Naive thymus-derived CD4-positive, alpha-beta T cell (primary cell): ENCODE measurements at regions of chr3 and their contacts with region 1.

Region 1: GRCh38 chr3:48188266-48189201 is at the start of gene CDC25A:
- DNase-seq: peak; percentile 69 to 94 (median 87)
- ATAC-seq: peak; percentile 100
- H3K4me3 ChIP-seq: peak within 1 kb of the TSS; percentile 88
- H3K4me3 Mint-ChIP-seq: peak within 1 kb of the TSS; percentile 89 to 96 (median 94)
- H3K27ac ChIP-seq: peak within 1 kb of the TSS; percentile 57
- H3K27ac Mint-ChIP-seq: peak within 1 kb of the TSS in 8 of 9 donors; percentile 8 to 84 (median 66)
- H3K4me1 ChIP-seq: peaks cover 4 to 6% of the 10 kb centered on the region in 2 donors
- H3K4me1 Mint-ChIP-seq: peaks cover 6 to 36% (median 13%) of the 10 kb centered on the region in 7 donors
- H3K27me3 ChIP-seq: no peaks in the 10 kb centered on the region
- H3K27me3 Mint-ChIP-seq: peaks cover 0 to 21% (median 14%) of the 10 kb centered on the region in 5 donors
- total RNA-seq, gene CDC25A: 0.61 to 20.7 TPM in 2 of 5 experiments, not detected in the others

Region 2: DNA sequence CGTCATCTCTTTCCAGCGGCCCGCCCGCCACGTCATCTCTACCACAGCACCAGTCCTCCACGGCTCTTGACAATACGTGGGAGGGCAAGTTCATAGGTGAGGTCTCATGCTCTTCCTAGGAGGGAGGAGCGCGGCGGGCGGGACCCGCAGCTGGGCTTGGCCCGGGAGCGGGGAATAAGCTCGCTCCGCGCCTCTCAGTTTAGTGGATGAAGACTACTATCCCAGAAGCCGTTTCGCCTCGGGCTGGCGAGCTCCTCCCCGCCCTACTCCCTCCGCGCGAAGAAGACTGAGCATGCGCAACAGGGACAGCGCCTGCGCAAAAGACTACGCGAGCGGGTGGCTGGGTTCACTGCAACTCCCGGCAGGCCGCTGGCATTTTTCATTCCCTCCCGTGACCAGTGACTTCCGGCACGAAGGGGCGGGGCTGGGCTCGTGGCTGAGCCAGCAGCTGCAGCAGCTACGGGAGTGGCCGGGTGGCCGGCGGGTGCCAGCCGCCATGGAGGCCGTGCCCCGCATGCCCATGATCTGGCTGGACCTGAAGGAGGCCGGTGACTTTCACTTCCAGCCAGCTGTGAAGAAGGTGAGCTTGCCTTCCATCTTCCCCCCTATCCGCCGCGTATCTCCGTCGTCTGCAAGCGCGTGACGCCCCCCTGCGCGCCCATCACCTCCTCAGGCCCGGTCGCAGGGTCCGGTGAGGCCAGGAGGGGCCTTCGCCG is 807.8 kb before region 1 on chr3 and contains the start of gene PTPN23:
- CTCF ChIA-PET with region 1: no interaction called
- POLR2A ChIA-PET with region 1: no interaction called
- intact Hi-C with region 1: loop called in 1 of 2 experiments (anchors 1 kb)
- DNase-seq: peak; percentile 96 to 99 (median 99)
- ATAC-seq: peak; percentile 82
- H3K4me3 ChIP-seq: peak within 1 kb of the TSS; percentile 86
- H3K4me3 Mint-ChIP-seq: peak within 1 kb of the TSS; percentile 90 to 100 (median 98)
- H3K27ac ChIP-seq: peak within 1 kb of the TSS; percentile 92
- H3K27ac Mint-ChIP-seq: peak within 1 kb of the TSS; percentile 92 to 100 (median 99)
- H3K4me1 ChIP-seq: peaks cover 23 to 26% of the 10 kb centered on the region in 2 donors
- H3K4me1 Mint-ChIP-seq: peaks cover 40 to 56% (median 48%) of the 10 kb centered on the region in 7 donors
- H3K27me3 ChIP-seq: no peaks in the 10 kb centered on the region
- H3K27me3 Mint-ChIP-seq: peaks cover 0 to 2% (median 0%) of the 10 kb centered on the region in 5 donors
- total RNA-seq, gene PTPN23: 35.8 to 51.2 (median 38.5) TPM

Region 3: DNA sequence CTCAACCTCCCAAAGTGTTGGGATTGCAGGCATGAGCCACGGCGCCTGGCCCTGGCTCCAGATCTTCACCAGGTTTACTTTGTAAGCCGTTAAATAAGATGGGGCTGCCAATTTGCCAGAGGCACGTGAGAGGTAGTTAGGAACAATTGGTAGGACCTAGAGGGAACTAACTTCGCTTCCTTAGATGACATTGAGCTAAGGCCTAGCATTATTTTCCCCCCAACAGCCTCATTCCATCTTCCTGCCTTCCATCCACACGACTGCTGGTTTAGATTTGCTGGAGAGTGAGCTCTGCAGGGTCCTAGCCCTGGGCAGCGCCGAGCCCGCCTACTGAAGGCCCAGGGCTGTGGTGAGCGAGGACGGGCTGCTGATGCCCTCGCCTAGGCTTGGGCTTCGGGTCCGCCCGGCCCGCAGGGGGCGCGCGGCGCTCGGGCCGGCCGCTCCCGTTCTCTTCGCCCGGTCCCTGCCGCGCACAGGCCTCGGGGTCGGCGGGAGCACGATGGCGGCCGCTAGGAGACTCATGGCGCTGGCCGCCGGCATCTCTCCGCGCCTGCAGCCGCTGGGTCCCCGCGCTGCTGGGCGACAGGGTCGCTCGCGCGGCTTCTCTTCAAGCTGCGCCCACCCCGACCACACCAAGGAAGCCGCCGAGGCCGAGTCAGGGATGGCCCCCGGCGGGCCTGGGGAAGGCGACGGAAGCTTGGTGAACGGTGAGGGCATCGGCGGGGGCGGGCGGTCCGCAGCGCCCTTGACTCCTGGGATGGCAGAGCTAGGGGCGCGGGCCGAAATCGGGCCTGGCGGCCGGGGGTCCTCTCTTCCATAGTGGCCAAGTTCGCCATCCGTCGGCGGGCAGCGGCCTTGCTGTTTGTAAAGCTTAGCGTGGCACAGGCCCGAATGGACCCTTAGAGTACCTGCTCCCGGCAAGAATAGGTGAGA is 363.7 kb before region 1 on chr3:
- CTCF ChIA-PET with region 1: no interaction called
- POLR2A ChIA-PET with region 1: no interaction called
- intact Hi-C with region 1: loop called in 1 of 2 experiments (anchors 1 kb)
- DNase-seq: peak; percentile 62 to 86 (median 79)
- ATAC-seq: peak; percentile 100
- H3K4me3 ChIP-seq: peak overlapping the region; percentile 79
- H3K4me3 Mint-ChIP-seq: peak overlapping the region; percentile 81 to 94 (median 90)
- H3K27ac ChIP-seq: peak overlapping the region; percentile 88
- H3K27ac Mint-ChIP-seq: peak overlapping the region; percentile 66 to 96 (median 89)
- H3K4me1 ChIP-seq: peaks cover 15% of the 10 kb centered on the region in 2 donors
- H3K4me1 Mint-ChIP-seq: peaks cover 15 to 46% (median 36%) of the 10 kb centered on the region in 7 donors
- H3K27me3 ChIP-seq: no peaks in the 10 kb centered on the region
- H3K27me3 Mint-ChIP-seq: no peaks in the 10 kb centered on the region

Region 4: GRCh38 chr3:47910777-47911440 is 277.6 kb before region 1 on chr3:
- CTCF ChIA-PET with region 1: no interaction called
- POLR2A ChIA-PET with region 1: no interaction called
- intact Hi-C with region 1: no loop called
- DNase-seq: no peak
- ATAC-seq: no peak
- H3K4me3 ChIP-seq: no peak overlapping the region
- H3K4me3 Mint-ChIP-seq: no peak overlapping the region
- H3K27ac ChIP-seq: no peak overlapping the region
- H3K27ac Mint-ChIP-seq: peak overlapping the region in 1 of 9 donors; percentile 34
- H3K4me1 ChIP-seq: no peaks in the 10 kb centered on the region
- H3K4me1 Mint-ChIP-seq: peaks cover 0 to 4% (median 0%) of the 10 kb centered on the region in 7 donors
- H3K27me3 ChIP-seq: no peaks in the 10 kb centered on the region
- H3K27me3 Mint-ChIP-seq: no peaks in the 10 kb centered on the region

Region 5: DNA sequence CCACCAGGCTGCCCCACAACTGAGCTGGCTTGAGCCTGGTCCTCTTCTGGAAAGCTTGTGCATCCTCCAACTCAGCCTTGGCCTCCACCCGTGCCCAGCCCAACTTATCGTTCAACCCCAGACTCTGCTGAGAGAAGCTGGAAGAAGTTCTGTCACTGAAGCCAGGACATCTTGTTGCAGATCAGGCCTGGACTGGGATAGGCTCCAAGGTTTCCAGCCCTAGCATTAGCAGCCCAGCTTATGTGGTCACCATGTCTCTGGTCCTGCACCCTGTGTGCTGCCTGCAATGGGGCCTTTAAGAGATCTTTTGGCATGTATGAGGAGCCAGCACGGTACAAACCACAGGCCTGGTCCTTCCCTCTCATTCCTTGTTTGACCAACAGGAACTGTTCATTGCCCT is 19.5 kb after region 1 on chr3:
- CTCF ChIA-PET with region 1: no interaction called
- POLR2A ChIA-PET with region 1: no interaction called
- intact Hi-C with region 1: no loop called
- DNase-seq: no peak
- ATAC-seq: no peak
- H3K4me3 ChIP-seq: no peak overlapping the region
- H3K4me3 Mint-ChIP-seq: no peak overlapping the region
- H3K27ac ChIP-seq: no peak overlapping the region
- H3K27ac Mint-ChIP-seq: no peak overlapping the region
- H3K4me1 ChIP-seq: no peaks in the 10 kb centered on the region
- H3K4me1 Mint-ChIP-seq: no peaks in the 10 kb centered on the region
- H3K27me3 ChIP-seq: no peaks in the 10 kb centered on the region
- H3K27me3 Mint-ChIP-seq: peaks cover 0 to 2% (median 0%) of the 10 kb centered on the region in 5 donors

Region 6: GRCh38 chr3:48240711-48241491 is 52.4 kb after region 1 on chr3 and contains the start of gene ZNF589:
- CTCF ChIA-PET with region 1: no interaction called
- POLR2A ChIA-PET with region 1: interaction called, 4 read pairs
- intact Hi-C with region 1: loop called (anchors 1 kb)
- DNase-seq: peak; percentile 87 to 96 (median 92)
- ATAC-seq: peak; percentile 99
- H3K4me3 ChIP-seq: peak within 1 kb of the TSS; percentile 92
- H3K4me3 Mint-ChIP-seq: peak within 1 kb of the TSS; percentile 82 to 94 (median 92)
- H3K27ac ChIP-seq: peak within 1 kb of the TSS; percentile 79
- H3K27ac Mint-ChIP-seq: peak within 1 kb of the TSS; percentile 88 to 96 (median 93)
- H3K4me1 ChIP-seq: peaks cover 7 to 14% of the 10 kb centered on the region in 2 donors
- H3K4me1 Mint-ChIP-seq: peaks cover 5 to 36% (median 25%) of the 10 kb centered on the region in 7 donors
- H3K27me3 ChIP-seq: no peaks in the 10 kb centered on the region
- H3K27me3 Mint-ChIP-seq: no peaks in the 10 kb centered on the region
- total RNA-seq, gene ZNF589: 37.7 to 64.0 (median 40.2) TPM

Region 7: GRCh38 chr3:48301020-48301796 is 112.7 kb after region 1 on chr3:
- CTCF ChIA-PET with region 1: no interaction called
- POLR2A ChIA-PET with region 1: no interaction called
- intact Hi-C with region 1: loop called (anchors 1 kb)
- DNase-seq: peak; percentile 69 to 95 (median 81)
- ATAC-seq: peak; percentile 97
- H3K4me3 ChIP-seq: peak within 1 kb of the TSS; percentile 89
- H3K4me3 Mint-ChIP-seq: peak within 1 kb of the TSS; percentile 84 to 97 (median 91)
- H3K27ac ChIP-seq: peak within 1 kb of the TSS; percentile 96
- H3K27ac Mint-ChIP-seq: peak within 1 kb of the TSS; percentile 81 to 98 (median 94)
- H3K4me1 ChIP-seq: peaks cover 10 to 12% of the 10 kb centered on the region in 2 donors
- H3K4me1 Mint-ChIP-seq: peaks cover 26 to 47% (median 40%) of the 10 kb centered on the region in 7 donors
- H3K27me3 ChIP-seq: no peaks in the 10 kb centered on the region
- H3K27me3 Mint-ChIP-seq: peaks cover 0 to 13% (median 0%) of the 10 kb centered on the region in 5 donors

Region 8: DNA sequence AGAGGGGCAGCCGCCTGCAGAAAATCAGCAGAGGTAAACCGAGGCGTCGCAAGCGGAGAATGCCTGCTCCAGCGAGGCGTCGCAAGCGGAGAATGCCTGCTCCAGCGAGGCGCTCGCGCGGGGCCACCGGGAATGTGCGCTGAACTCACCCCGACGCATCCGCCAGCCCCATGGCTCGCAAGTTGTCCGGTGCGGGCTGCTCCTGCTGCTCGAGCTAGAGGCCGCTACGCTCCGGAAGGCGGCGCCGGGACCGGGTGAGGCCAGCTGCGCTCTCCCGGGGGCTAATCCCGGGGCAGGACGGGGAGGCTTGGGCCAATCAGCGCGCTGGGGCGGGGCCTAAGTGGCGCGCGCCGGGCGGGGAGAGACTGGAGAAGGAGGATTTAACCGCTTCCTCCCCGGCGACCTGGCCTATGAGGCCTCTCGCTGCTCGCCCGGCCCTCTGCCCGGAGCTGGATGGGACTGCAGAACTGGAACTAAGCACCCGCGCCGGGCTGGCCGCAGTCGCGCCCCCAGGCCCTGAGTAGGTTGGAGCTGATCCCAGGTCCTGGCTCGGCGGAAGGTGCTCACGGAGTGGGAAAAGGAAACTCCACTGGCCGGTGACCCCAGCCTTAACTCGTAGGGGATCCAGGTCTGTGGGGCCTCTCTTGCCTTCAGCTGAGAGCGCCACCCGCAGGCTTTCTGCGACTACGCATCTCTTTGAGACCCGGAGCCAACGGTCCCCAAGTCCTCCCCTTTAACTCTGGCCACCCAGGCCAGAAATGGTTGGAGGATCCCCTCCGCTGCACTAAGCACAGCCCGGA is 446.9 kb after region 1 on chr3 and contains the start of gene SLC26A6:
- CTCF ChIA-PET with region 1: no interaction called
- POLR2A ChIA-PET with region 1: no interaction called
- intact Hi-C with region 1: loop called in 1 of 2 experiments (anchors 1 kb)
- DNase-seq: peak; percentile 81 to 98 (median 86)
- ATAC-seq: peak; percentile 98
- H3K4me3 ChIP-seq: peak within 1 kb of the TSS; percentile 76
- H3K4me3 Mint-ChIP-seq: peak within 1 kb of the TSS; percentile 79 to 92 (median 88)
- H3K27ac ChIP-seq: peak within 1 kb of the TSS; percentile 70
- H3K27ac Mint-ChIP-seq: peak within 1 kb of the TSS in 7 of 9 donors; percentile 12 to 84 (median 68)
- H3K4me1 ChIP-seq: peaks cover 0 to 11% of the 10 kb centered on the region in 2 donors
- H3K4me1 Mint-ChIP-seq: peaks cover 4 to 31% (median 22%) of the 10 kb centered on the region in 7 donors
- H3K27me3 ChIP-seq: no peaks in the 10 kb centered on the region
- H3K27me3 Mint-ChIP-seq: no peaks in the 10 kb centered on the region
- total RNA-seq, gene SLC26A6: 15.1 to 37.6 (median 31.2) TPM